GM13976 (cell line): ENCODE measurements at regions of chr10 and their contacts with region 1.

Region 1: GRCh38 chr10:79929409-79929904 is 19.4 kb downstream of the SFTPD start:
- DNase-seq: peak; percentile 78
- CTCF ChIP-seq: peak; percentile 94

Region 2: GRCh38 chr10:79562135-79562756 is 367.2 kb before region 1 on chr10:
- in situ Hi-C with region 1: loop called (anchors 10 kb)
- DNase-seq: peak; percentile 75
- CTCF ChIP-seq: peak; percentile 80

Region 3: GRCh38 chr10:79981450-79982361 is 52.2 kb after region 1 on chr10:
- in situ Hi-C with region 1: no loop called
- DNase-seq: peak; percentile 22
- CTCF ChIP-seq: no peak